Calu3 (cell line): ENCODE measurements at regions of chr17 and their contacts with region 1.

Region 1: GRCh38 chr17:42577532-42578281 is at the start of gene PSMC3IP:
- DNase-seq: peak; percentile 98
- H3K4me3 Mint-ChIP-seq: peak within 1 kb of the TSS; percentile 82
- H3K27ac Mint-ChIP-seq: peak within 1 kb of the TSS; percentile 75
- H3K4me1 Mint-ChIP-seq: peaks cover 46% of the 10 kb centered on the region
- H3K27me3 Mint-ChIP-seq: no peaks in the 10 kb centered on the region
- CTCF ChIP-seq: peak; percentile 54
- total RNA-seq, gene PSMC3IP: 31.8 and 32.4 TPM in 2 replicates

Region 2: DNA sequence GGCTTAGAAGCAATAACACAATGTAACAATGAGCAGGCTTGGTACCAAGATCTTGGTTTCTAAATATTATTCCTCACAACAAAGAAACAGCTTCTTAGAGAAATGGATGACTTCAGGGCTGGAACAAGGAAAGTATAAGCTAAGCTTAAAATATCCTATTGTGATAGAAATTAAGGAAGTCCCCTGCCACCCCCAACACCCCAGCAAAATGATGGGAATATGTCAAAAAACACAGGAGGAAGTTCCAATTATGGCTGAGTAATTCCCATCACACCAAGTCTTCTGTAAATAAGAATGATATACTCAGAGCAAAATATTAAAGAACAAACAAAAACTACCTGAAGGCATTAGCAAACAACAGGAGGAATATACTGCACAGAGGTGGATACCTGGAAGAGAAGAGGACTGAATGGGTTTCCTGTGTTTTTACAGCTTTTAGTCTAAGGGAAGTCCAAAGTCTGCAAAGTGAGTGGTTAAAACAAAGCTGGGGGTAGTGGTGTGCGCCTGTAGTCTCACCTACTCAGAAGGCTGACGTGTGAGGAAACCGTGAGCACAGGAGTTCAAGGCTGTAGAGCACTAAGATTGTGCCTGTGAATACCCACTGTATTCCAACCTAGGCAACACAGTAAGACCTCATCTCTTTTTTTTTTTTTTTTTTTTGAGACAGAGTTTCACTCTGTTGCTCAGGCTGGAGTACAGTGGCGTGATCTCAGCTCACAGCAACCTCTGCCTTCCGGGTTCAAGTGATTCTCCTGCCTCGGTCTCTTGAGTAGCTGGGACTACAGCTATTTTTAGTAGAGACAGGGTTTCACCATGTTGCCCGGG is 136.1 kb before region 1 on chr17:
- CTCF ChIA-PET with region 1: no interaction called
- intact Hi-C with region 1: no loop called
- DNase-seq: no peak
- H3K4me3 Mint-ChIP-seq: no peak overlapping the region
- H3K27ac Mint-ChIP-seq: peak overlapping the region; percentile 2
- H3K4me1 Mint-ChIP-seq: peaks cover 13% of the 10 kb centered on the region
- H3K27me3 Mint-ChIP-seq: no peaks in the 10 kb centered on the region
- CTCF ChIP-seq: no peak

Region 3: DNA sequence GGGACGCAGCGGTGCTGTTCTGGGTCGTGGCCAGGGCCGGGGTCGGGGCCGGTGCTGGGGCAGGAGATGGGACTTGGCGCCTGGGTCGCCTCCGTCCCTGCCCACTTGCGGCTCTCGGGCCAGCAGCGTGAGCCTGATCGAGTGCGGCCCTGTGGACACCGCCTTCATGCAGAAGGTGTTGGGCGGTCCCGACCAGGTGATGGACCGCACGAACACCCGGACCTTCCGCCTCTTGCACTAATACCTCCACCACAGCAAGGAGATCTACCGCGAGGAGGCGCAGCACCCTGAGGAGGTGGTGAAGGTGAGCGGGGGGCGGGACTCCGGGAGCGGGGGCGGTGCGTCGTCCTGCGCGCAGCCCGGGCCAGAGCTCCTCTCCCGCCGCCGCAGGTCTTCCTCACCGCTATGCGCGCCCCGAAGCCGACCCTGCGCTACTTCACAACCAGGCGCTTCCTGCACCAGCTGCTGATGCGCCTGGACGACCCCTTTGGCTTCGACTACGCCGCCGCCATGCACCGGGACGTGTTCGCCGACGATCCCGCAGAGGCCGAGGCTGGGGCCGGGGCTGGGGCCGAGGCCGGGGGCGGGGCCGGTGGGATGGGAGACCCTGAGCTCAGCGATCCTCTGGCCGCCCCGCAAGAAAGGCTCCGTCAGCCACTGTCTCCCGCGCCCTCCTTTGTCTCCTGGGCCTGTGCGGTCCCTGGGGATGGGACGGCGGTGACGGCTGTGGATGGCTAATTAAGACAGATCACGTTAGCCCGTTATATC is 29.5 kb before region 1 on chr17:
- CTCF ChIA-PET with region 1: interaction called, 14 read pairs
- intact Hi-C with region 1: no loop called
- DNase-seq: peak; percentile 98
- H3K4me3 Mint-ChIP-seq: peak overlapping the region; percentile 56
- H3K27ac Mint-ChIP-seq: no peak overlapping the region
- H3K4me1 Mint-ChIP-seq: peaks cover 30% of the 10 kb centered on the region
- H3K27me3 Mint-ChIP-seq: no peaks in the 10 kb centered on the region
- CTCF ChIP-seq: peak; percentile 88

Region 4: DNA sequence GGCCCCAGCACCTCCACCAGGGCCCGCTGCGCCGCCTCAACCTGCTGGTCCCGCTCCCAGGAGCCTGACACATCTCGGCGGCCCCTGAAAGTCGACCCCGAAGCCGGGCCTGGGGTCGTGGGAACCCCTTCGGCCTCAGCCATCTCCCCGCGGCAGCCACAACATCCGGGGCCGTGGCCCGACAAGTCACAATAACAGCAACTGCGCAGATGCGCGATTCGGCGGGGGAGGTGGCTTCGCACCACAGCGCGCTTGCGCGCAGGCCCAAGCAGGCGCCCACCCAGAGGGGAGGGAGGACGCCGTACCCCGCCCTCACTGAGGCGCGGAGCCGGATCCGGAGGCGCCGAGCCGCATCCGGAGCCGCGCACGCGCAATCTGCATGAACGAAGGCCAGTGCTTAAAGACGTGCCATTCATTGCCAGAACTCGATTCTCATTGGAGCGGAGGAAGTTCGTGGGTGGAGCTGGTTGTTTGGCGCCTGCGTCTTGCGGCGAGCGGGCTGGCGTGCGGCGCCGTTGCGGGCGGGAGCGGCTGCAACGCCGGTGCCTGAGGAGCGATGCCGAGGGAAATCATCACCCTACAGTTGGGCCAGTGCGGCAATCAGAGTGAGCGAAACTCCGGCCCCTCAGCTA is 31.6 kb after region 1 on chr17 and contains the starts of genes RETREG3 and TUBG1:
- CTCF ChIA-PET with region 1: interaction called, 26 read pairs
- intact Hi-C with region 1: no loop called
- DNase-seq: peak; percentile 100
- H3K4me3 Mint-ChIP-seq: peak within 1 kb of the TSS; percentile 88
- H3K27ac Mint-ChIP-seq: peak within 1 kb of the TSS; percentile 75
- H3K4me1 Mint-ChIP-seq: no peaks in the 10 kb centered on the region
- H3K27me3 Mint-ChIP-seq: no peaks in the 10 kb centered on the region
- CTCF ChIP-seq: no peak
- total RNA-seq, gene RETREG3: 71.2 and 80.6 TPM in 2 replicates
- total RNA-seq, gene TUBG1: 130 and 133 TPM in 2 replicates

Region 5: DNA sequence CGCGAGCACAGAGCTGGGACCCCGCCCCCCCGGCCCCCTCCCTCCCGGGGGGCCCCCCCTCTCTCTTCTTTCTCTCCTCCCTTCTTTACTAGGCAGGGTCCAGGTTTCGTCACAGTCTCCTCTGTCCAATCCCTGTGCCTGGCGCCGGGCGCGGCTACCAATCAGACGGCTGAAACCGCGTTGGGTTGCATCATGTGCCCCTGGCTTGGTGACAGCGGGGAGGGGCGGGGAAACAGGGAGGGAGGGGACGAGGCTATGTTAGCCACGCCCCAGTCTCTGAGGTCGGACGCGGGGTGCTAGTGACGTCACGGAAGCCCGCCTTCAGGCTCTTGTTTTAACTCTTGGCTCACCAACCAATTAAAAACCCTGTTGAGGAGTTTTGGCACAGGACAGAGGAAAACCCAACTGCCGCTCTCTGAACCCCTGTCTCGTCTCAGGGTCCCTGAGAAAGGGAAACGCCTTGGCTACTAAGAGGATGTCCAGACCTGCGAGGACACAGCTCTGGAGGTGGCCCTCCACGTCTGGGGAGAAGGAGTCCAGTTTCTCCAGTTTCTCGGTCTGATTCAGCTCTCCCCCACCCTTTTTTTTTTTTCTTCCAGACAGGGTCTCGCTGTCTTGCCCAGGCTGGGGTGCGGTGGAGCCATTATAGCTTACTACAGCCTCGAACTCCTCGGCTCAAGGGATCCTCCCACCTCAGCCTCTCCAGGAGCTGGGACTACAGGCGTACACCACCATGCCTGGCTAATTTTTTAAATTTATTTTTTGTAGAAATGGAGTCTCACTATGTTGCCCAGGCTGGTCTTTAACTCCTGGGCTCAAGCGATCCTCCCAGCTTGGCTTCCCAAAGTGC is 99.5 kb after region 1 on chr17:
- CTCF ChIA-PET with region 1: interaction called, 66 read pairs
- intact Hi-C with region 1: loop called (anchors 5 kb)
- DNase-seq: peak; percentile 100
- H3K4me3 Mint-ChIP-seq: peak overlapping the region; percentile 93
- H3K27ac Mint-ChIP-seq: peak overlapping the region; percentile 94
- H3K4me1 Mint-ChIP-seq: peaks cover 48% of the 10 kb centered on the region
- H3K27me3 Mint-ChIP-seq: peaks cover 12% of the 10 kb centered on the region
- CTCF ChIP-seq: no peak

Region 6: DNA sequence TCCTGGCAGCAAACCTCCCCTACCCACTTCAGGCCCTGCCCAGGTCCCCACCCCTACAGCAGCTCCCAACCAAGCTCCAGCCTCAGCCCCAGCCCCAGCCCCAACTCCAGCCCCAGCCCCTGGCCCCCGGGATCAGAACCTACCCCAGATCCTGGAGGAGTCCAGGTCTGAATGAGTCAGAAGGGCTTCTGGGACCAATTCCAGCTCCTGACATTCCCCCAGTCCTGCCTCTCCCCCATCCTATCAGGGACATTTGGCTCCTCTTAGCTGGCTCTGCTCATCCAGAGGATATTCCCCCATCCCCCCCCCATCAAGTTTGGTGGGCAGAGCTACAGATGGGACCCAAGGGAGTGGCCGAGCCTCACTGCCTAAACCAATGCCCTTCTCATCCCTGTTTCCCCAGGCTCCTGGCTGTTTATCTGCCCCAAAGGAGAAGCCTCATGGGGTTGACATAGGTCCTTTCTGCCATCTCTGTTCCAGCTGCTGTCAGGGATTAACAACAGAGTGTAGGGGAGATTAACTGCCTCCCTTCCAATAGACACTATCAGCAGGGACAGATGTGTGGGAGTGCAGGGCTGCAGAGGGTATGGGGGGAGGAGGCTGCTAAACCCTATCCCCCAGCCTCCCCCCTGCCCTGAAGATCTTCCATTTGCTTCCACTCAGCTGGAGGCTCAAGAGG is 121.2 kb after region 1 on chr17:
- CTCF ChIA-PET with region 1: no interaction called
- intact Hi-C with region 1: no loop called
- DNase-seq: no peak
- H3K4me3 Mint-ChIP-seq: no peak overlapping the region
- H3K27ac Mint-ChIP-seq: no peak overlapping the region
- H3K4me1 Mint-ChIP-seq: no peaks in the 10 kb centered on the region
- H3K27me3 Mint-ChIP-seq: no peaks in the 10 kb centered on the region
- CTCF ChIP-seq: no peak

Region 7: GRCh38 chr17:42819944-42820535 is 242.3 kb after region 1 on chr17:
- CTCF ChIA-PET with region 1: interaction called, 14 read pairs
- intact Hi-C with region 1: no loop called
- DNase-seq: peak; percentile 83
- H3K4me3 Mint-ChIP-seq: no peak overlapping the region
- H3K27ac Mint-ChIP-seq: no peak overlapping the region
- H3K4me1 Mint-ChIP-seq: peaks cover 6% of the 10 kb centered on the region
- H3K27me3 Mint-ChIP-seq: no peaks in the 10 kb centered on the region
- CTCF ChIP-seq: peak; percentile 84